Activated CD4-positive, alpha-beta memory T cell treated with anti-CD3 and anti-CD28 coated beads for 36 hours (primary cell): ENCODE measurements at regions of chrX and their contacts with region 1.

Region 1: GRCh38 chrX:9312922-9313867 is 151.7 kb upstream of the TBL1X start:
- DNase-seq: peak; percentile 83
- H3K4me3 Mint-ChIP-seq: no peak overlapping the region
- H3K27ac Mint-ChIP-seq: no peak overlapping the region
- H3K4me1 Mint-ChIP-seq: peaks cover 13% of the 10 kb centered on the region
- H3K27me3 Mint-ChIP-seq: no peaks in the 10 kb centered on the region

Region 2: DNA sequence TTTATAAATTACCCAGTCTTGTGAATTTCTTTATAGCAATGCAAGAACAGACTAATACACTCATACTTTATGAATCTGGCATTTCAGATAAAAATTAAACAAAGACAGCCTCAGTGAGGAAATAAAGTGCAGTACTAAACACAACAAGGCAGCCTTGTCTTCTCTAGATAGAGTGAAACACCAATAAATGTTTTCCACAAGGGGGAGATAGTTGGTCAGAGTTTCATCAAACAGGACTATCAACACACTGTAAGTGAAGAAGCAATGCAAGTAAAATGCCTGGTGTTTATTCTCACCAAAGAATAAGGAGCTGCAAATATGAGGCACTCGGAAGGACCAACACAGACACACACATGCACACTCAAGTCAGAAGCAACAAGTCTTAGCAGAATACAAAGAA is 342.1 kb before region 1 on chrX:
- CTCF ChIA-PET with region 1: interaction called, 5 read pairs
- POLR2A ChIA-PET with region 1: no interaction called
- intact Hi-C with region 1: loop called (anchors 1 kb)
- DNase-seq: no peak
- H3K4me3 Mint-ChIP-seq: no peak overlapping the region
- H3K27ac Mint-ChIP-seq: no peak overlapping the region
- H3K4me1 Mint-ChIP-seq: no peaks in the 10 kb centered on the region
- H3K27me3 Mint-ChIP-seq: no peaks in the 10 kb centered on the region

Region 3: DNA sequence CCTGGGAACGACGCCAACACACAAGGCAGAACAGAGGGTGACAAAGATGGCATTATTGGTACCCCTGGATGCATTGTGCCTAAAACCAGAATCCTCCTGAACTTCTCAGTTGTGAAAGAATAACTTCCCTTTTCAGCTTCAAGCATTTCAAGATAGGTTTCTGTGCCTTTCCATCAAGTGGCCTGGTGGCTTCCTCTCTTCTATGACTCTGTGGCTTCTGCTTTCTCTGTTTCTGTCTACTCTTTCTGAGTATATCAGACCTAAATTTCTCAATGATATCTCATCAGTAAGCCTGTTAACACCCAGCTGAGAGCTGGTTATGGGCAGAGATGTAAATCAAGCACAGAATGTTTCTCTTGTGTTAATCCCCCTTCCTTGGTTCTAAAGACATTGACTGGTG is 257.8 kb before region 1 on chrX:
- CTCF ChIA-PET with region 1: no interaction called
- POLR2A ChIA-PET with region 1: no interaction called
- intact Hi-C with region 1: loop called (anchors 10 kb)
- DNase-seq: no peak
- H3K4me3 Mint-ChIP-seq: no peak overlapping the region
- H3K27ac Mint-ChIP-seq: no peak overlapping the region
- H3K4me1 Mint-ChIP-seq: no peaks in the 10 kb centered on the region
- H3K27me3 Mint-ChIP-seq: no peaks in the 10 kb centered on the region